Right cardiac atrium (tissue), 5 donors: ENCODE measurements at regions of chr12 and their contacts with region 1.

Region 1: DNA sequence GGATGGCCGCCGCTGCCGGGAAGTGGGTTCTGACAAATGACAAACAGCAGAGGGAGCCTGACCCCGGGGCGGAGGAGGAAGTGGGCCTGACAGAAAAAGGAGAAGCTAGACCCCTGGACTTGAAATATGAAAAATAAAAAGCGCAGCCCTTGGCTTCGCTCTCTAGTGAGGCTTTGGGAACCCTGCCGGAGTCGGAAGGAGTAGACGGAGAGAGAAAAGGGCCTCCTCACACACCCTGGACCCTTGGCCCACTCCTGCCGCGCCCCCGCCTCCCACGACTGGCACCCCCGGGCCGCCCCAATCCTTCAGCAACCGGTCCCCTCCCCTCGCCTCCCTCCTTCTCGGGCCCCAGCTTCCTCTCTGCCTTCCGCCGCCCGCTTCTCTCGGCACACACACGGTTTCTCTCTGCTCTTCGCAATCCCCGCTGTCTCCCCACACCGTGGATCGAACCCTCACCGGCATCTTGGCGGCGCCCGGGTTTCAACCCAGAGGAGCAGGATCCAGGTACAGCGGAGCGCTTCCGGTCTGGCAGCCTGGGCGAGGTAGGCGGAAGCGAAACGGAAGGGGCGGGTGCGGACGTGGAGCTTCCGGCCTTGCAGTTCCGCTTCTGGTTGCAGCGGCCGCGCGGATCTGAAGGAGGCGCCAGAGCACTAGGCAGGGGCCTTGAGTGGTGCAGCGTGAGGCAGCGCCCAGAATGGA is at the start of gene ARPC3:
- DNase-seq: peak; percentile 95 to 98 (median 98)
- ATAC-seq: peak; percentile 99
- H3K4me3 ChIP-seq: peak within 1 kb of the TSS; percentile 95
- H3K27ac ChIP-seq: peak within 1 kb of the TSS; percentile 98
- H3K4me1 ChIP-seq: peaks cover 2% of the 10 kb centered on the region
- H3K27me3 ChIP-seq: no peaks in the 10 kb centered on the region
- total RNA-seq, gene ARPC3: 79.7 to 101 (median 95.5) TPM

Region 2: DNA sequence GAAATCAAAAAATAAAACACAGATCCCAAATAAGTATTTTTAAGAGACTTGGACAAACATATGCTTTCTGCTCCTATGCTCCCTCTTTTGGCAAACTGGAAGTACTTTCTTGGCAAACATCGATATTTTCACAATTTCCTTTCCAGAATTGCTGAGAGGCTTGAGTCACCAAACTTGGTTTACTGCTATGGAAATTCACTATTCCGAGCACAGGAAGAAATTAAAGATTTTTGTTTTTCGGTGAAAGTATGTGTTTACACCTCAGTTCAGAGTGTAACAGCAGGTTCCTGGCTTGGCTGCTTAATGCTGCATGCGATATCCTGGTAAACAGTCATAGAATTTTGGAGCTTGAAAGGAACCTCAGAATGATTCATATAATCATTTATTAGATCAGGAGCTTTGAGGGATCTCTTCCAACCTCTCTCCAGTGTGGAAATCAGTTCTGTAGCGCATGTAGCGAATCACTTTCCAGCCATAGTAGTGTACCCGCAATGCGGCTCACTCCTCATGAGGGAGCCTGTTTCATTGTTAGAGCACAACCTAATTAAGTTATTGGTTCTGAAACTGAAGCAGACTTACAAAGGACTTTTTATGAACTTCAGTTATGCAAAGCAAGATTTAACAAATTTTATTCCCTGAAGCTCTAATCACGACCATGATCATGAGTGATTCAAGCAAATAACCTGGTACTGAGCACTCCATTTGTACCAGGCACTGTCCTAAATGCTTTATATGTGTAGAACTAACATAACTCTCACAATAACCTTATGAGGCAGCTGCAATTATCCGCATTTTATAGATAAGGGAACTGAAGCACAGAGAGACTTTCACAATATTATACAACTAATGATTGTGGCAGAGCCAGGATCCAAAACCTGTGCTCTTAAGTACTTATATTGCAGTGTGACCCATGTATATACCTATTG is 225.3 kb before region 1 on chr12:
- intact Hi-C with region 1: no loop called
- DNase-seq: no peak
- ATAC-seq: peak; percentile 78 to 82
- H3K4me3 ChIP-seq: peak overlapping the region; percentile 26
- H3K27ac ChIP-seq: peak overlapping the region; percentile 64
- H3K4me1 ChIP-seq: peaks cover 2% of the 10 kb centered on the region
- H3K27me3 ChIP-seq: no peaks in the 10 kb centered on the region

Region 3: GRCh38 chr12:110498984-110499706 is 49.2 kb after region 1 on chr12:
- intact Hi-C with region 1: no loop called
- DNase-seq: no peak
- ATAC-seq: no peak
- H3K4me3 ChIP-seq: no peak overlapping the region
- H3K27ac ChIP-seq: no peak overlapping the region
- H3K4me1 ChIP-seq: peaks cover 3% of the 10 kb centered on the region
- H3K27me3 ChIP-seq: no peaks in the 10 kb centered on the region

Region 4: GRCh38 chr12:110600254-110600653 is 150.3 kb after region 1 on chr12:
- intact Hi-C with region 1: loop called in 1 of 4 experiments (anchors 10 kb)
- DNase-seq: no peak
- ATAC-seq: no peak
- H3K4me3 ChIP-seq: no peak overlapping the region
- H3K27ac ChIP-seq: no peak overlapping the region
- H3K4me1 ChIP-seq: peaks cover 2% of the 10 kb centered on the region
- H3K27me3 ChIP-seq: no peaks in the 10 kb centered on the region

Region 5: DNA sequence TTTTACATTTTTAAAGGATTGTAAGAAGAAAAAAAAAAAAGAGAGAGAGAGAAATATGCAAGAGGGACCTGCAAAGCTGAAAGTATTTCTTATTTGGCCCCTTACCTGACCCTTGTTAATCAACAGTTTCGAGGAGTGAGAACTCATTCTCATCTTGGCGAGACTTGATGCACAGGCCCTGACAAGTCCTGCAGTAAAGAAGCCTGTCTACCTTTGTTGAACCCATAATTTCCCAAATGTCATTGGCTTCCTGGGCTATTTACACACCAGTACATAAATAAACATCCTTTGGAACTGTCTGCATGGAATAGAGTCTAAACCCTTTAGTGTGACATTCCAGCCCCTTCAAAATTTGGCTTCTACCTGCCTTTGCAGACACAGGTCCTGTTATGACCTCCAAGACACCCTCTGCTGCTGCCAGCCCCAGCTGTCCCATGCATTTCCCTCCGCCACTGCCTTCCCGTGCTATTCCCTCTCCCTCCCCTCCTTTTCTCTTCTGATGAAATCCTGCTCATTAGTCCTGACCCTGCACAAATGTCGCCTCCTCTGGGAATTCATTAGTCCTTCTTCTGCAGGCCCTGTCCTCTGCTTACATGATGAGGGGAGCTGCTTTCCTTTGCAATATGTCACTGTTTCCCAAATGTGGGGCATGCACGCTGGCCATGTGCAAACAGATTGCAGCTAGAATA is 435.3 kb after region 1 on chr12:
- intact Hi-C with region 1: no loop called
- DNase-seq: no peak
- ATAC-seq: no peak
- H3K4me3 ChIP-seq: no peak overlapping the region
- H3K27ac ChIP-seq: no peak overlapping the region
- H3K4me1 ChIP-seq: no peaks in the 10 kb centered on the region
- H3K27me3 ChIP-seq: no peaks in the 10 kb centered on the region